Head of caudate nucleus (tissue), 42 donors: ENCODE measurements at regions of chr14 and their contacts with region 1.

Region 1: DNA sequence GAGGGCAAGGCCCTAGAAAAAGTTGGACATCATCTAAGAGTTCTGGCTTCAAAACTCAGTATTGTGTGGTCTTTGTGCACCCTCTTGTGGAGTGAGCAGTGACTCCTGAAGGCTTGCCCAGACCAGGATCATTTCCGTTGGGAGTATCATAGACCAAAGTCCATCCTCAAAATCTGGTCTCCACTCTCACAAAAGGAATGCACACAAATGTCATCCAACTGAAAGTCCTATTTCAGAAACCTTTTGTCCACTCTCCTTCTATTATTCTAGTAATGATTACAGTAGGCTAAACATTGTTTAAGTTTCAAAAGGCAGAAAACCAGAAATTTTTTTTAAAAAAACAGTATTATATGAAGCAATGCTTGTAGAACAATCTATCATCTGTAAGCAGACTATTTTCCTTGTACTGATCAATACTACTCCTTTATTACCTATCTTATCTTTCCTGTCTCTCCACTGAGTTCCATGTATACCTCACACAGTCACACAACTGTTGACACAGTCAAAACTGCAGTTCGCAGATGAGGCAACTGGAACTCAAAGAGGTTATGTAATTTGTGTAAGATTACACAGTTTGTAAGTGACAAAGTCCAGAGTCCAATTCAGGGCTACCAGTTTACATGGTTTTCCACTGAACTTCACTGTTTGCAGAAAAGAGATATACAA is 41.4 kb downstream of the COX16 start:
- DNase-seq: peak in 35 of 42 donors; percentile 2 to 70 (median 39)

Region 2: GRCh38 chr14:70086685-70087379 is 231.3 kb before region 1 on chr14:
- intact Hi-C with region 1: loop called (anchors 10 kb)
- DNase-seq: peak in 40 of 42 donors; percentile 7 to 75 (median 46)

Region 3: GRCh38 chr14:70448633-70449340 is 130.7 kb after region 1 on chr14:
- intact Hi-C with region 1: no loop called
- DNase-seq: no peak